ENCODE measurements at regions of chr18 and their contacts with region 1.

Region 1: GRCh38 chr18:22348521-22349316 is 69.0 kb downstream of the CTAGE1 start:
- DNase-seq: peak in 1 of 2 donors; percentile 83
- H3K4me3 ChIP-seq: peak overlapping the region; percentile 54 to 66
- H3K27ac ChIP-seq: peak overlapping the region; percentile 93 to 97
- H3K4me1 ChIP-seq: peaks cover 7 to 21% of the 10 kb centered on the region in 2 donors
- H3K27me3 ChIP-seq: no peaks in the 10 kb centered on the region
- CTCF ChIP-seq: no peak

Region 2: GRCh38 chr18:22194151-22194598 is 154.5 kb before region 1 on chr18:
- intact Hi-C with region 1: loop called (anchors 5 kb)
- DNase-seq: no peak
- H3K4me3 ChIP-seq: peak overlapping the region; percentile 24 to 43
- H3K27ac ChIP-seq: peak overlapping the region; percentile 89 to 97
- H3K4me1 ChIP-seq: peaks cover 9 to 84% of the 10 kb centered on the region in 2 donors
- H3K27me3 ChIP-seq: no peaks in the 10 kb centered on the region
- CTCF ChIP-seq: no peak

Region 3: GRCh38 chr18:22286621-22287020 is 62.1 kb before region 1 on chr18:
- intact Hi-C with region 1: loop called (anchors 5 kb)
- DNase-seq: peak in 1 of 2 donors; percentile 79
- H3K4me3 ChIP-seq: peak overlapping the region; percentile 18 to 35
- H3K27ac ChIP-seq: peak overlapping the region; percentile 19 to 35
- H3K4me1 ChIP-seq: peaks cover 0 to 4% of the 10 kb centered on the region in 2 donors
- H3K27me3 ChIP-seq: no peaks in the 10 kb centered on the region
- CTCF ChIP-seq: no peak

Region 4: DNA sequence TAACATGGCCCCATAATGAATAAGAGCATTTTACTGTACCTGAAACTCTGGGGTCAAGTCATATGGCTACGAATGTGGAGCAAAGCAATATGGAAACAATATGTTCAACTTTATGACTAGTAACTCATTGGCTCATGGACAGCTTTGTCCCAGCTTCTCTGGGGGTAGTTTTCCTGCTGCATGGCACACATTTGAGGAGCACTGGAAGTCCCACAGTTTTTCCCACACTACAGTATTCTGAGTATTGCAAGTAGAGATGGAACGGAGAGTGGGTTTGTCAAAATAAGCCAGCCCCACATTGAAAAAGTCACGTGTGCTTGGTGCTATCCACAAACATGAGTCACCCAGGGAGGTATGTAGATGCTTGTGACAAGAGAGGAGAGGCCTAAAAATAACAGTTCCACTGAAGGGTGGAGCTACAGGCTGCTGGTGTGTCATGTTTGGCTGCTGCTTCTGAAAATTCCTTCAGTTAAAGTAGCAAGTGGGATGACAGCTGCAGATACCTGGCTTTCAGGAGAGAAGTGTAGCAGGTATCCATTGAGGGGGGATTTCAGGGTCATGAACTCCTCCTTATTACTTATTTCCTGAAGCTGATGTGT is 117.2 kb after region 1 on chr18:
- intact Hi-C with region 1: loop called (anchors 1 kb)
- DNase-seq: peak; percentile 45 to 88
- H3K4me3 ChIP-seq: no peak overlapping the region
- H3K27ac ChIP-seq: peak overlapping the region; percentile 78 to 93
- H3K4me1 ChIP-seq: peaks cover 17 to 25% of the 10 kb centered on the region in 2 donors
- H3K27me3 ChIP-seq: no peaks in the 10 kb centered on the region
- CTCF ChIP-seq: no peak

Region 5: GRCh38 chr18:22933206-22933957 is 584.7 kb after region 1 on chr18 and contains the start of gene RBBP8:
- intact Hi-C with region 1: loop called (anchors 5 kb)
- DNase-seq: peak; percentile 33 to 88
- H3K4me3 ChIP-seq: peak within 1 kb of the TSS; percentile 80 to 86
- H3K27ac ChIP-seq: peak within 1 kb of the TSS; percentile 94 to 97
- H3K4me1 ChIP-seq: peaks cover 0 to 4% of the 10 kb centered on the region in 2 donors
- H3K27me3 ChIP-seq: no peaks in the 10 kb centered on the region
- CTCF ChIP-seq: no peak
- total RNA-seq, gene RBBP8: 1.9 TPM